Activated T-helper 2 cell treated with anti-CD3 and anti-CD28 coated beads, Interferon-gamma antibody, Interleukin-2, Interleukin-4, amounts not matched to agents 10 μg/mL and 5 μg/mL and 100 μg/mL, durations not matched to agents 14 hours and 24 hours and 36 hours (primary cell): ENCODE measurements at regions of chr19 and their contacts with region 1.

Region 1: DNA sequence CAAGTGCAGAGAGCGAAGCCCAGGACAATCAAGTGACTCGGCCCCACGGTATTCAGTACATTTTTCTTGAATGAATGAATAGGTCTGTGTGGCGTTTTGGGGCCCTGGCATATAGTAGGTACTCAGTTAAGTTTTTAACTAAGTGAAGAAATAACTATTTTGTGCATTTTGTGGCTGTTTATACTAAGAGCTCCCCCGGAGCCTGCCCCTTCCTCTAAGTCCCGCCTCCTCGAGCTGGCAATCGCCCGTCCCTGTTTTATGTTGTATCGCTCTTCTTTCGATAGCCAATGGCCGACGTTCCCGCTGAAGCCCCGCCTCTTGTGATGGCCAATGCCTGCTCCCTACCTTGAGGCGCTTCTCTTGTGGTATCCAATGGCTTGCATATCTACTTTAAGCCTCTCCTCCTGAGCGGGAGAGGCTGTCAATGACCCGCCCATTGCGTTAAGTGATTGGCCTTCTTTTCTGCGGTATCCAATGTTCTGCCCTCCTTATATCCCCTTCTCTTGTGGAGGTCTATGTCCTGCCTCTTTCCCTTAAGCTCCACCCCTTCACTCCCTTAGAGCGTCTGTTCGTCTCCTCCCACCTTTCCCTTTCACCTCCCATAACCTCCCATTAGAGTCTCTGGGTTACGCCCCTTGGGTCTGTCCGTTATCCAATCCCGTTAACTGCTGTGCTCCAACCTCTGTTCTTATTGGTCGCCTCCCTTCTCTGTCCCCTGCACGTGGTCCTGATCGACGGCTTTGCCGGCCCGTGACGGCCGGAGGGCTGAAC is 509 bp upstream of the HDGFL2 start:
- DNase-seq: peak; percentile 99
- H3K4me3 Mint-ChIP-seq: no peak overlapping the region
- H3K27ac Mint-ChIP-seq: no peak overlapping the region
- H3K4me1 Mint-ChIP-seq: peaks cover 18% of the 10 kb centered on the region
- H3K27me3 Mint-ChIP-seq: no peaks in the 10 kb centered on the region

Region 2: GRCh38 chr19:4328243-4328990 is 143.2 kb before region 1 on chr19:
- intact Hi-C with region 1: loop called (anchors 10 kb)
- DNase-seq: peak; percentile 85
- H3K4me3 Mint-ChIP-seq: peak overlapping the region; percentile 83
- H3K27ac Mint-ChIP-seq: peak overlapping the region; percentile 76
- H3K4me1 Mint-ChIP-seq: peaks cover 17% of the 10 kb centered on the region
- H3K27me3 Mint-ChIP-seq: peaks cover 3% of the 10 kb centered on the region

Region 3: GRCh38 chr19:4457654-4458395 is 13.8 kb before region 1 on chr19 and contains the start of gene UBXN6:
- intact Hi-C with region 1: loop called (anchors 1 kb)
- DNase-seq: peak; percentile 98
- H3K4me3 Mint-ChIP-seq: peak within 1 kb of the TSS; percentile 92
- H3K27ac Mint-ChIP-seq: peak within 1 kb of the TSS; percentile 85
- H3K4me1 Mint-ChIP-seq: peaks cover 12% of the 10 kb centered on the region
- H3K27me3 Mint-ChIP-seq: no peaks in the 10 kb centered on the region
- total RNA-seq, gene UBXN6: 51.7 and 52.8 TPM in 2 replicates